Activated CD8-positive, alpha-beta T cell treated with anti-CD3 and anti-CD28 coated beads for 36 hours (primary cell): ENCODE measurements at regions of chr20 and their contacts with region 1.

Region 1: DNA sequence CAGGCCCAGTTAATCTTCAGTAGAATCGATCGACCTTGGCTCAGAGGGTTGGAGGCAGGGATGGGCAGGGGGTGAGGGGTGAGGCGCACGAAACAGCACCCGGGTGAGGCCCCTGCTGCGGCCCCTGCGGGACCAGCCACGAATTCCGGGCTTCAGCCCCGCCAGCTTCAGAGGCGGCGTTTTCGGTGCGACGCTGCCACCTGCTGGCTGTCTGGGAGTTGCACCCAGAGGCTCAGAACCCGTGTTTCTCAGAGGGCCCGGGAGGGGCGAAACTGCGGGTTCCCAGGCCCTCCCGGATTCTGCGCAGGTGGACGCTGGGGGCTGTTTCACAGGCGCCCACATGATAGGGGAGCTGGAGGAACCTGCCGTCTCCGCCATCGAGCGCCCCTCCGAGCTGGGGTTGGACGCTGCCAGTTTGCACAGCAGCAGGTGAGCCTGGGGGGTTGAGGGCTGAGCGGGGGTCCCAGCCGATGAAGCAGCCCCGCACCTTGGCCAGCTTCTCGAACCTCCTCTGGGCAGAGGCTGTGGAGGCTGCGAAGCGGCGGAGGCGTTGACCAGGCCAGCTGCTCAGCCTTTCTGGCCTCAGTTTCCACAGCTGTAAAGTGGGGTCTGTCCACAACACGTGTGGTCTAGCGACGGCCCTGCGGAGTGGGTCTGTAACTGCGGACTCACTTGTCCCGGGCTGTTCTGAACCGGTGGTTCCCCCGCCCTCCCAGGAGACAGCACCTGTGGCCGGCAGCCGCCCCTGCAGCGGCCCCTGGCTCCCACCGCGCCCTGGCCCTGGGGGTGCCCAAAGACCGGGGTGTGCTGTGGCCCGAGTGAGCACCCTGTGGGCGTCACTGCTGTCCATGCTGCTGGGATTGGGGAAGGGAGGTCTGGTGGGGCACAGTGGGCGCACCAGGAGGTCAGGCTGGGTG is 2.5 kb upstream of the BHLHE23 start:
- DNase-seq: peak; percentile 88
- ATAC-seq: peak; percentile 74
- H3K4me3 Mint-ChIP-seq: peak overlapping the region; percentile 66
- H3K27ac Mint-ChIP-seq: no peak overlapping the region
- H3K4me1 Mint-ChIP-seq: peaks cover 32% of the 10 kb centered on the region
- H3K27me3 Mint-ChIP-seq: peaks cover 41% of the 10 kb centered on the region
- CTCF ChIP-seq: peak; percentile 95

Region 2: DNA sequence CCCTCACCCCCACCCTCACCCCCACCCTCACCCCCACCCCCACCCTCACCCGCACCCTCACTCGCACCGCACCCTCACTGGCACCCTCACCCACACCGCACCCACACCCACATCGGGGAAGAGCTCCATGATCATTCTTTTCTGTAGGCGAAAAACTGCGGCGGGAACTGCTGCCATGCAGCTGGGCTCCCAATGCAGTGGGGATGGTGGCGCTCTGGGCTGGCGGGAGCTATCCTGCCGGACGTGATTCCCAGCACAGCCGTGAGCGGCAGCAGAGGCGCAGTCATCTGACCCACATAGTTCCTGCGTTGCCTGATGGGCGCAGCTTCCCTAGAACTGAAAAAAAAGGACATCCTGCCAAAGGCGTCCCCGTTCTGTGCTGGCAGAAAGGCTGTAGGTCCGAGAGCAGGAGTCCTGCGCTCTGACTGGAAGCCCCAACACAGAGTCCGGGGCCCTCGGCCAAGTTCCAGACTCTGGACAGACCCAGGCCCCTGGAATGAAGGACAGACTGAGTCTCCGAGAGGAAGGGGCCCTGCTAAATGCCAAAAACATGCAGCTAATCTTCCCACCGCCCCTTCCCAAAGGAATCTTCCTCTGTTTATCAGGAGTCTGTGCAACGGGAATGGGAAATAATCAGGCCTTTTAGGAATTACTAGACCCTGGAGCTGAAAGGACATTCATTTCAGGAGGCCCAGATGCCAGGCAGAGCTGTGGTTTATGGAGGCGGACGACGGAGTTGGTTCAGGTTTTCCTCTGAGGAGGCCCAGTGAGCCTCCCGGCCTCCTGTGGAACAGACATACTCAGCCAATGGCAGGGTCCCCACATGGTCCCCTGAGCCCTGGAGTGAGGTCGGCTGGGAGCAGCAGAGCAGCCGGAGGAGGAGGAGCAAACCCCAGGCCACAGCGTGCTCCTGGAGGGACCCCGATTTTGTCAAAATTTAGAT is 133.6 kb before region 1 on chr20:
- CTCF ChIA-PET with region 1: interaction called, 13 read pairs
- POLR2A ChIA-PET with region 1: no interaction called
- intact Hi-C with region 1: no loop called
- DNase-seq: peak; percentile 23
- ATAC-seq: peak; percentile 22
- H3K4me3 Mint-ChIP-seq: no peak overlapping the region
- H3K27ac Mint-ChIP-seq: peak overlapping the region; percentile 79
- H3K4me1 Mint-ChIP-seq: peaks cover 18% of the 10 kb centered on the region
- H3K27me3 Mint-ChIP-seq: no peaks in the 10 kb centered on the region
- CTCF ChIP-seq: no peak

Region 3: DNA sequence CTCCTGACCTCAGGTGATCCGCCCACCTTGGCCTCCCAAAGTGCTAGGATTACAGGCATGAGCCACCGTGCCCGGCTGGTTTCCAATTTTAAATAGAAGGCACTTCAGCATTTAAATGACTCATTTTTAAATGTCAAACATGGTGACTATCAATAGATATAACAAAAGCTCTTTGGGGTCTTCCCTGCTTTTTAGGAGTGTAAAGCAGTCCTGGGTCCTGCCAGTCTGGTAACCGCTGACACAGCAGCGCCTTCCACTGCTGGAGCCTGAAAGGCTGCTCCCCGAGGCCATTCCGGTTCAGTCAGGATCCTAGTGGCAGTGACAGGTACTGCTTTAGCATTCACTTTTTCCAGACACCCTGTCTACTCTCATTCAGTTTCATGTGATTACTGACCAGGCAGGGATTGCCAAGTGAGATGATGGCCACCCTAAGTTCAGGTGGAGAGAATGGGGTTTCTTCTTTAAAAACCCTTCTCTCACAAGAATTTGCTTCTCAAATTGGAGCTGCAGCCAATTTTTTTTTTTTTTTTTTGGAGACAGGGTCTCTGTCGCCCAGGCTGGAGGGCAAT is 88.1 kb before region 1 on chr20:
- CTCF ChIA-PET with region 1: interaction called, 13 read pairs
- POLR2A ChIA-PET with region 1: no interaction called
- intact Hi-C with region 1: no loop called
- DNase-seq: peak; percentile 89
- ATAC-seq: peak; percentile 70
- H3K4me3 Mint-ChIP-seq: peak overlapping the region; percentile 15
- H3K27ac Mint-ChIP-seq: peak overlapping the region; percentile 90
- H3K4me1 Mint-ChIP-seq: peaks cover 74% of the 10 kb centered on the region
- H3K27me3 Mint-ChIP-seq: no peaks in the 10 kb centered on the region
- CTCF ChIP-seq: peak; percentile 71

Region 4: DNA sequence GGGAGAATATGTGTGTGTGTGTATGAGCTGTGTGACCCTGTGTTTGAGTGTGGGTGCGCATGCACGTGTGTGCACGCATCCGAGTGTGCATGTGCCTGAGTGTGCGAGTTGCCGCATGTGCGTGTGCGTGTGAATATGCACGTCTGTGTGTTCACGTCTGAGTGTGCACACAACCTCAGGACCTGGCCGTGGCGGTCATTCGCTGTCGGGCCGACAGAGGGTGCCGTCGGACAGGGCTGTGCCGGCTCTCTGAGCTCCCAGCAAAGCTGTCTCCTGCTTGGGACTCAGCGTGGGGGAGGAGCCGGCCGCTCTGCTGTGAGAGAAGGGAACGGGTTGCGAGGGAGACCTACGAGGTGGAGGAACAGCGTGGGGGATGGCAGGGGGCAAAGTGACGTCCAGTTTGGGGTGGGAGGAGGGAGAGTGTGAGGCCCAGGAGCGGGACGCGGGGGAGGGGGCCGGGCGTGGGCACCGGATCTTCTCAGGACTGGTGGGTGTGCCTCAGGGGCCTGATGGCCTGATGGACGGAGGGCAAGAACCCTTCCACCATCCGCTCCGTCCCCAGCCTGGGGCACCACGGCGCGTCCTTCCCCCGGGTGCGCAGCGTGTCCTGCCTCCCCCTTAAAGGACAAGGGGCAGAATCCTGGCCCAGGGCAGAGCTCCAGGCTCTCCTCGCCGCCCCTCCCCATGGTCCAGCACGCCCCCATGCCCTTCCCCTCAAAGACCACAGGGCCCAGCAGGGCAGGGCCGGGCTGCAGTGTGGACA is 36.9 kb before region 1 on chr20:
- CTCF ChIA-PET with region 1: interaction called, 5 read pairs
- POLR2A ChIA-PET with region 1: interaction called, 11 read pairs
- intact Hi-C with region 1: loop called (anchors 2 kb)
- DNase-seq: peak; percentile 92
- ATAC-seq: peak; percentile 99
- H3K4me3 Mint-ChIP-seq: no peak overlapping the region
- H3K27ac Mint-ChIP-seq: no peak overlapping the region
- H3K4me1 Mint-ChIP-seq: peaks cover 19% of the 10 kb centered on the region
- H3K27me3 Mint-ChIP-seq: peaks cover 39% of the 10 kb centered on the region
- CTCF ChIP-seq: peak; percentile 66

Region 5: GRCh38 chr20:62977613-62978560 is 31.4 kb before region 1 on chr20:
- CTCF ChIA-PET with region 1: no interaction called
- POLR2A ChIA-PET with region 1: interaction called, 11 read pairs
- intact Hi-C with region 1: loop called (anchors 2 kb)
- DNase-seq: peak; percentile 90
- ATAC-seq: peak; percentile 87
- H3K4me3 Mint-ChIP-seq: peak overlapping the region; percentile 8
- H3K27ac Mint-ChIP-seq: no peak overlapping the region
- H3K4me1 Mint-ChIP-seq: peaks cover 38% of the 10 kb centered on the region
- H3K27me3 Mint-ChIP-seq: peaks cover 48% of the 10 kb centered on the region
- CTCF ChIP-seq: no peak